ENCODE measurements at regions of chr22 and their contacts with region 1.

Region 1: DNA sequence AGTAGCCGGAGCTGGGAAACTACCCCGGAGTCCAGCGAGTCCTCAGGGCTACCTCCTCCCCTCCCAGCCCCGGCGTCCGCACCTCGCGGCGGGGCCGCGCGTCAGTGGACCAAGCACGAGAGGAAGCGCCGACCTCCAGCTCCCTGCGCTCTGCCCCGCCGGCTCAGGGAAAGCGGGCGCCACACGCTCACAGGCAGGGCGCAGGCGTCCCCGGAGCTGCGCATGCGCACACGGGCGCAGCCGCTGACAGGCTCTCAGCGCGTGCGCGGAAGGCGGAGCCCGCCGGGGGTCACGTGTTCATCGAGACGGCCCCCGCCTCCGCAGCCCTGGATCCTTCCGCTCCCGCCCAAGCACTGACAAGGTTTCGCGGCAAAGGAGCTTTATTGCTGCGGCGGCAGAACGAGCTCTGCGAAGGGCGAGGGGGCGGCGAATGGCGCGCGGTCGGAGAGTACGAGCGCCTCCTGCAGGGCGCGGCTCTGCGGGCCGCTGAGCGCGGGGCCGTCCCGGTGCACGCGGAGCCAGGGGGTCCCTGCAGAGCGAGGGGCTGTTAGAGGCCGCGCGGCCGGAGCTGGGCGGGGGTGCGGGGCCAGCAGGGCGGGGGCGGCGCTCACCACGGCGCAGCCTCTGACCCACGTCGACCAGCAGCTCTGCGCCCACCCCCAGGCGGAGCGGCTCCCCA is at the start of gene SCO2:
- DNase-seq: peak; percentile 95 to 97
- H3K4me3 ChIP-seq: peak within 1 kb of the TSS; percentile 65 to 77
- H3K27ac ChIP-seq: peak within 1 kb of the TSS; percentile 86 to 87
- H3K4me1 ChIP-seq: peaks cover 0 to 44% (median 27%) of the 10 kb centered on the region in 4 donors
- H3K27me3 ChIP-seq: peaks cover 0 to 16% of the 10 kb centered on the region in 2 donors
- CTCF ChIP-seq: peak; percentile 39 to 50

Region 2: GRCh38 chr22:50367778-50368500 is 157.6 kb before region 1 on chr22:
- intact Hi-C with region 1: no loop called
- DNase-seq: no peak
- H3K4me3 ChIP-seq: no peak overlapping the region
- H3K27ac ChIP-seq: no peak overlapping the region
- H3K4me1 ChIP-seq: peaks cover 0 to 12% (median 0%) of the 10 kb centered on the region in 4 donors
- H3K27me3 ChIP-seq: no peaks in the 10 kb centered on the region
- CTCF ChIP-seq: no peak

Region 3: GRCh38 chr22:50507991-50508884 is 17.3 kb before region 1 on chr22 and contains the start of gene NCAPH2:
- intact Hi-C with region 1: loop called (anchors 2 kb)
- DNase-seq: peak; percentile 92 to 97
- H3K4me3 ChIP-seq: peak within 1 kb of the TSS; percentile 88 to 99
- H3K27ac ChIP-seq: peak within 1 kb of the TSS; percentile 92 to 94
- H3K4me1 ChIP-seq: peaks cover 0 to 37% (median 19%) of the 10 kb centered on the region in 4 donors
- H3K27me3 ChIP-seq: no peaks in the 10 kb centered on the region
- CTCF ChIP-seq: peak in 1 of 2 experiments; percentile 8

Region 4: GRCh38 chr22:50582562-50583293 is 57.2 kb after region 1 on chr22 and contains the start of gene CHKB:
- intact Hi-C with region 1: loop called (anchors 5 kb)
- DNase-seq: peak; percentile 97 to 99
- H3K4me3 ChIP-seq: peak within 1 kb of the TSS; percentile 60 to 80
- H3K27ac ChIP-seq: peak within 1 kb of the TSS; percentile 83 to 95
- H3K4me1 ChIP-seq: peaks cover 0 to 35% (median 29%) of the 10 kb centered on the region in 4 donors
- H3K27me3 ChIP-seq: peaks cover 0 to 15% of the 10 kb centered on the region in 2 donors
- CTCF ChIP-seq: no peak

Measured in tibial artery (tissue), 4 donors.